ENCODE measurements at regions of chr1 and their contacts with region 1.

Region 1: DNA sequence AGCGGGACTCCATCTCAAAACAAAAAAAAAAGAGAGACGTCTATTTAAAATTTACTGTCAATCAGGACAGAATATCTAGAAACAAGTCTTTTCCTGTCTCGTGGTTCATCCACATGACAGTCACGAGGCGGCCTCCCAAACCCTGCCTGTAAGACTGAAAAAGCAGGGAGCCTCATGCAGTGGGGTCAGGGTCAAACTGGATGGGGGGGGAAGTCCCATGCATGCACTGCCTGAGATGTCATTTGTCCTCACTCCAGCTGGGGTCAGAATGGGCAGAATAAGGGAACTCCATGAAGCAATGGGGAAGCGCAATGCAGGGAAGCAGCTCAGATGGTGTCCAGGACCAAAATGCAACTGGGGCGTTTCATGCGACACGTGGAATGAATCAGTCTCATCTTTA is 85.5 kb downstream of the PIK3CD start:
- DNase-seq: no peak
- ATAC-seq: no peak
- H3K4me3 ChIP-seq: no peak overlapping the region
- H3K4me3 Mint-ChIP-seq: peak overlapping the region in 6 of 10 donors; percentile 12 to 52 (median 19)
- H3K27ac ChIP-seq: no peak overlapping the region
- H3K27ac Mint-ChIP-seq: peak overlapping the region; percentile 4 to 91 (median 72)
- H3K4me1 ChIP-seq: peaks cover 0 to 20% of the 10 kb centered on the region in 2 donors
- H3K4me1 Mint-ChIP-seq: peaks cover 12 to 52% (median 34%) of the 10 kb centered on the region in 7 donors
- H3K27me3 ChIP-seq: no peaks in the 10 kb centered on the region
- H3K27me3 Mint-ChIP-seq: no peaks in the 10 kb centered on the region

Region 2: DNA sequence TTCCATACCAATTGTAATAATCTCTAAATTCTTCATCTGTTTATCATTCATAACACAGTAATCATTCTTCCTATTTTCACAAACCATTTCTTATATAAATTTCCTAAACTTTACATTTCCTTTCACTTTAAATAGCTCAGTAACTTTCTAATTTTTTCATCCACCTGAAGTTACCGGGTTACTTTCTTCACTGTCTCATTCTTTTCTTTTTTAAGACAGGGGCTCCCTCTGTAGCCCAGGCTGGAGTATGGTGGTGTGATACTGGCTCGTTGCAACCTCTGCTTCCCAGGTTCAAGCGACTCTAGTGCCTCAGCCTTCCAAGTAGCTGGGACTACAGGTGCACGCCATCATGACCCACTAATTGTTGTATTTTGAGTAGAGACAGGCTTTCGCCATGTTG is 961.0 kb before region 1 on chr1:
- CTCF ChIA-PET with region 1: no interaction called
- POLR2A ChIA-PET with region 1: no interaction called
- intact Hi-C with region 1: no loop called
- DNase-seq: no peak
- ATAC-seq: no peak
- H3K4me3 ChIP-seq: no peak overlapping the region
- H3K4me3 Mint-ChIP-seq: no peak overlapping the region
- H3K27ac ChIP-seq: no peak overlapping the region
- H3K27ac Mint-ChIP-seq: peak overlapping the region in 1 of 9 donors; percentile 18
- H3K4me1 ChIP-seq: no peaks in the 10 kb centered on the region
- H3K4me1 Mint-ChIP-seq: peaks cover 0 to 11% (median 9%) of the 10 kb centered on the region in 7 donors
- H3K27me3 ChIP-seq: no peaks in the 10 kb centered on the region
- H3K27me3 Mint-ChIP-seq: no peaks in the 10 kb centered on the region

Region 3: GRCh38 chr1:9724706-9725476 is 12.2 kb before region 1 on chr1:
- CTCF ChIA-PET with region 1: interaction called, 3 read pairs
- POLR2A ChIA-PET with region 1: interaction called, 192 read pairs
- intact Hi-C with region 1: no loop called
- DNase-seq: peak; percentile 58 to 72 (median 64)
- ATAC-seq: peak; percentile 65
- H3K4me3 ChIP-seq: no peak overlapping the region
- H3K4me3 Mint-ChIP-seq: peak overlapping the region in 8 of 10 donors; percentile 14 to 68 (median 62)
- H3K27ac ChIP-seq: peak overlapping the region; percentile 51
- H3K27ac Mint-ChIP-seq: peak overlapping the region; percentile 73 to 88 (median 80)
- H3K4me1 ChIP-seq: peaks cover 36 to 83% of the 10 kb centered on the region in 2 donors
- H3K4me1 Mint-ChIP-seq: peaks cover 38 to 84% (median 60%) of the 10 kb centered on the region in 7 donors
- H3K27me3 ChIP-seq: no peaks in the 10 kb centered on the region
- H3K27me3 Mint-ChIP-seq: no peaks in the 10 kb centered on the region

Region 4: DNA sequence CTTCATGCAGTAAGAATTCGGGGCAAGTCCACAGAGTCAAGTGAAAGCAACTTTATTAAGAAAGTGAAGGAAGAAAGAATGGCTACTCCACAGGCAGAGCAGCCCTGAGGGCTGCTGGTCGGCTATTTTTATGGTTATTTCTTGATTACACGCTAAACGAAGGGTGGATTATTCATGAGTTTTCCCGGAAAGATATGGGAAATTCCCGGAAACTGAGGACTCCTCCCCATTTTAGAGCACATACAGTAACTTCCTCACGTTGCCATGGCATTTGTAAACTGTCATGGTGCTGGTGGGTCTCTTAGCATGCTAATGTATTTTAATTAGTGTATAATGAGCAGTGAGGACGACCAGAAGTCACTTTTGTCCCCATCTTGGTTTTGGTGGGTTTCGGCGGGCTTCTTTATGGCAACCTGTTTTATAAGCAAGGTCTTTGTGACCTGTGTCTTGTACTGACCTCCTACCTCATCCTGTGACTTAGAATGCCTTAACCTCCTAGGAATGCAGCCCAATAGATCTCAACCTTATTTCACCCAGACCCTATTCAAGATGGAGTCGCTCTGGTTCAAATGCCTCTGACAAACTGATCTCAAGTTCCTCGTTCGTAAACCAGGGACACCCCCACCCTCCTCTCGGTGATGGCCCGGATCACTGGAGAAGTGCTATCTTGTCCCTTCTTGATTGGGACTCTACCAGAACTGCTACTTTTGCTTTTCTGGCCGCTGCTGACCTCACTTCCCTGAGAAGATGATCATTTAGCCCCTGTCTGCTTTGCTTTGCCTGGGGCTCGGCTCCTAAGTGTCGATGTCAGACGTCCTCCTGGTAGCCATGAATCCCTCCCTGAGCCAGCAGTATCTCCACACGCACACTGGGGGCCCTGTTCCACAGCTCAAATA is 37.9 kb after region 1 on chr1:
- CTCF ChIA-PET with region 1: no interaction called
- POLR2A ChIA-PET with region 1: no interaction called
- intact Hi-C with region 1: no loop called
- DNase-seq: no peak
- ATAC-seq: no peak
- H3K4me3 ChIP-seq: no peak overlapping the region
- H3K4me3 Mint-ChIP-seq: no peak overlapping the region
- H3K27ac ChIP-seq: no peak overlapping the region
- H3K27ac Mint-ChIP-seq: peak overlapping the region in 3 of 9 donors; percentile 22 to 59 (median 40)
- H3K4me1 ChIP-seq: no peaks in the 10 kb centered on the region
- H3K4me1 Mint-ChIP-seq: peaks cover 5 to 43% (median 27%) of the 10 kb centered on the region in 7 donors
- H3K27me3 ChIP-seq: no peaks in the 10 kb centered on the region
- H3K27me3 Mint-ChIP-seq: no peaks in the 10 kb centered on the region

Measured in naive thymus-derived CD4-positive, alpha-beta T cell (primary cell).